ENCODE measurements at regions of chr6 and their contacts with region 1.

Region 1: DNA sequence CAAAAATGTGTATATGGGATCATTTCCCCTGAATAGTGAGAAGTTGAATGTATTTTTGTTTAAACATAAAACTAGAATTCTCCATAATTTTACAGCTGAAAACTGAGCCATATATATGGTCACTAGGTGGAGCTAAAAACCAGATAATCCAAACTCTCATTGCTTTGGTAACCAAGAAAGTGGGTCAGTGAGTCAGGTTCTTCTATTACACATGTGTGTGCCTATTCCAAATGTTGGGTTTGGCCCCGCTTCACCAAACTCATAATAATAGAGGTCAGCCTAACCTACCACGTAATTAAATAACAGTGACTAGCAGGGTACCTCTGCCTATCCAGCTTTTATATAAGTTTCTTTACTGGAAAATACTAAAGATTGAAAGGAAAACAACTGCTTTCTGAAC is 19.3 kb upstream of the RNGTT start:
- DNase-seq: no peak
- ATAC-seq: peak; percentile 74
- H3K4me3 Mint-ChIP-seq: no peak overlapping the region
- H3K27ac Mint-ChIP-seq: no peak overlapping the region
- H3K4me1 Mint-ChIP-seq: peaks cover 2% of the 10 kb centered on the region
- H3K27me3 Mint-ChIP-seq: peaks cover 9% of the 10 kb centered on the region

Region 2: GRCh38 chr6:88997327-88997726 is 14.6 kb after region 1 on chr6:
- CTCF ChIA-PET with region 1: interaction called, 14 read pairs
- POLR2A ChIA-PET with region 1: no interaction called
- DNase-seq: no peak
- ATAC-seq: no peak
- H3K4me3 Mint-ChIP-seq: no peak overlapping the region
- H3K27ac Mint-ChIP-seq: no peak overlapping the region
- H3K4me1 Mint-ChIP-seq: peaks cover 4% of the 10 kb centered on the region
- H3K27me3 Mint-ChIP-seq: peaks cover 7% of the 10 kb centered on the region

Region 3: GRCh38 chr6:89080542-89081422 is 98.1 kb after region 1 on chr6 and contains the start of gene PNRC1:
- CTCF ChIA-PET with region 1: interaction called, 53 read pairs
- POLR2A ChIA-PET with region 1: interaction called, 27 read pairs
- DNase-seq: peak; percentile 100
- ATAC-seq: peak; percentile 76
- H3K4me3 Mint-ChIP-seq: peak within 1 kb of the TSS; percentile 93
- H3K27ac Mint-ChIP-seq: peak within 1 kb of the TSS; percentile 99
- H3K4me1 Mint-ChIP-seq: peaks cover 25% of the 10 kb centered on the region
- H3K27me3 Mint-ChIP-seq: no peaks in the 10 kb centered on the region
- total RNA-seq, gene PNRC1: 89.2 to 90.8 TPM

Region 4: GRCh38 chr6:89122625-89123024 is 139.9 kb after region 1 on chr6:
- CTCF ChIA-PET with region 1: interaction called, 15 read pairs
- POLR2A ChIA-PET with region 1: no interaction called
- DNase-seq: no peak
- ATAC-seq: no peak
- H3K4me3 Mint-ChIP-seq: no peak overlapping the region
- H3K27ac Mint-ChIP-seq: no peak overlapping the region
- H3K4me1 Mint-ChIP-seq: peaks cover 2% of the 10 kb centered on the region
- H3K27me3 Mint-ChIP-seq: peaks cover 17% of the 10 kb centered on the region

Region 5: GRCh38 chr6:89242574-89243330 is 260.0 kb after region 1 on chr6:
- CTCF ChIA-PET with region 1: interaction called, 22 read pairs
- POLR2A ChIA-PET with region 1: no interaction called
- DNase-seq: peak; percentile 25
- ATAC-seq: no peak
- H3K4me3 Mint-ChIP-seq: no peak overlapping the region
- H3K27ac Mint-ChIP-seq: no peak overlapping the region
- H3K4me1 Mint-ChIP-seq: peaks cover 33% of the 10 kb centered on the region
- H3K27me3 Mint-ChIP-seq: peaks cover 26% of the 10 kb centered on the region